Aorta (tissue), 5 donors: ENCODE measurements at regions of chr14 and their contacts with region 1.

Region 1: DNA sequence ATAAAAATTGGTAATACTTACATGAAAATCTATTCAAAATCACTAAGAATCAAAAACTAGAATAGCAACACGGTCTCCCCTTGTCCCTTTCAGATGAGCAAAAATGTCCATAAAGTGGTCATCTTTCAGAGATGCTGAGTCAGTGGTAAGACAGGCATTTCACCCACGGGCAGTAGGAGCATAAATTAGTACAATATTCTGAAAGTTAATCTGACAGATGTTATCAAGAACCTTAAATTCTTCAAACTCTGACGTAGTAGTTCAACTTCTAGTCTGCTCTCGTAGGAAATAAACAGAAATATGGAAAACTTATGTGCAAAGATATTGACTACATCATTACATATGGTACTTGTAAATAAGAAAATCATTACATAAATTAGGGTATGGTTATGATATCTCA is 33.1 kb upstream of the GNPNAT1 start:
- DNase-seq: no peak
- ATAC-seq: no peak
- H3K4me3 ChIP-seq: no peak overlapping the region
- H3K27ac ChIP-seq: no peak overlapping the region
- H3K4me1 ChIP-seq: no peaks in the 10 kb centered on the region
- H3K27me3 ChIP-seq: no peaks in the 10 kb centered on the region

Region 2: GRCh38 chr14:52692248-52692962 is 132.1 kb before region 1 on chr14:
- intact Hi-C with region 1: no loop called
- DNase-seq: no peak
- ATAC-seq: no peak
- H3K4me3 ChIP-seq: no peak overlapping the region
- H3K27ac ChIP-seq: no peak overlapping the region
- H3K4me1 ChIP-seq: peaks cover 0 to 5% of the 10 kb centered on the region in 2 donors
- H3K27me3 ChIP-seq: no peaks in the 10 kb centered on the region

Region 3: GRCh38 chr14:52961060-52961639 is 136.6 kb after region 1 on chr14:
- intact Hi-C with region 1: loop called (anchors 2 to 5 kb)
- DNase-seq: no peak
- ATAC-seq: peak; percentile 88
- H3K4me3 ChIP-seq: no peak overlapping the region
- H3K27ac ChIP-seq: no peak overlapping the region
- H3K4me1 ChIP-seq: no peaks in the 10 kb centered on the region
- H3K27me3 ChIP-seq: no peaks in the 10 kb centered on the region

Region 4: DNA sequence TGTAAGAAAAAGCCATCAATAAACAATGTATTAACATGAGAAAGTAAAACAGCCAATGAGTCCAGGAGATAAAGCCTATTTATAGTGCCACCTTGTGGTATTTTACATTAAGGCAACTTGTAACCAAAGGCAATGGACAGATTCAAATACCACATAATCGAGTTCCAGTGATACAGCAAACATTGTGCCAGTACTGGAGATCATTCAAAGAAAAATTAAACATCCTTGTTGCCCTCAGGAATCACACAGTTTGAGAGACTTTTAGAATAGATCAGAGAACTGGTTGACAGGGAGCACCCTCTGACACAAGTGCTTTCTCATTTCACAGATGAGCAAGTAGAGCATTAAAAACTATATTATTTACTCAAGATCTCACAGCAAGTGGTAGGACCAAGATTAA is 230.5 kb after region 1 on chr14:
- intact Hi-C with region 1: loop called (anchors 2 to 10 kb)
- DNase-seq: no peak
- ATAC-seq: peak; percentile 81
- H3K4me3 ChIP-seq: no peak overlapping the region
- H3K27ac ChIP-seq: no peak overlapping the region
- H3K4me1 ChIP-seq: peaks cover 0 to 2% of the 10 kb centered on the region in 2 donors
- H3K27me3 ChIP-seq: no peaks in the 10 kb centered on the region

Region 5: GRCh38 chr14:53306267-53306721 is 481.8 kb after region 1 on chr14:
- intact Hi-C with region 1: loop called in 1 of 2 experiments (anchors 10 kb)
- DNase-seq: peak; percentile 71 to 79
- ATAC-seq: peak; percentile 80
- H3K4me3 ChIP-seq: peak overlapping the region; percentile 51 to 88
- H3K27ac ChIP-seq: no peak overlapping the region
- H3K4me1 ChIP-seq: no peaks in the 10 kb centered on the region
- H3K27me3 ChIP-seq: no peaks in the 10 kb centered on the region

Region 6: GRCh38 chr14:53619691-53620231 is 795.3 kb after region 1 on chr14:
- intact Hi-C with region 1: no loop called
- DNase-seq: no peak
- ATAC-seq: peak; percentile 63
- H3K4me3 ChIP-seq: no peak overlapping the region
- H3K27ac ChIP-seq: no peak overlapping the region
- H3K4me1 ChIP-seq: no peaks in the 10 kb centered on the region
- H3K27me3 ChIP-seq: no peaks in the 10 kb centered on the region